Endothelial cell of umbilical vein (primary cell): ENCODE measurements at regions of chr1 and their contacts with region 1.

Region 1: GRCh38 chr1:150259758-150260669 is 2.4 kb downstream of the CA14 start:
- DNase-seq: peak; percentile 9
- H3K4me3 ChIP-seq: no peak overlapping the region
- H3K27ac ChIP-seq: no peak overlapping the region
- H3K4me1 ChIP-seq: peaks cover 7% of the 10 kb centered on the region
- H3K27me3 ChIP-seq: peaks cover 15 to 27% of the 10 kb centered on the region in 2 experiments
- CTCF ChIP-seq: no peak
- POLR2A ChIP-seq: no peak

Region 2: DNA sequence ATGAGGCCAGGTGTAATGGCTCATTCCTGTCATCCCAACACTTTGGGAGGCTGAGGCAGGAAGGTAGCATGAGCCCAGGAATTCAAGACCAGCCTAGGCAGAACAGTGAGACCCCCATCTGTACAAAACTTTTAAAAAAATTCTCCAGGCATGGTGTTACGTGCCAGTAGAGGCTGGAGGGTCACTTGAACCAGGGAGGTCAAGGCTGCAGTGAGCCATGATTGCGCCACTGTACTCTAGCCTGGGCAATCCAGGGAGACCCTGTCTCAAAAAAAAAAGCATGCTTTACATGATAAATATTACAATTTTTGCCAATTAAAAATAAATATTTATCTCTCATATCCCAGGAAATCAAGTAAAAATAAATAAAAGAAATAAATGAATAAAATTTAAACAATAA is 210.1 kb before region 1 on chr1:
- CTCF ChIA-PET with region 1: no interaction called
- POLR2A ChIA-PET with region 1: no interaction called
- dilution Hi-C with region 1: no loop called
- intact Hi-C with region 1: no loop called
- DNase-seq: no peak
- H3K4me3 ChIP-seq: no peak overlapping the region
- H3K27ac ChIP-seq: no peak overlapping the region
- H3K4me1 ChIP-seq: no peaks in the 10 kb centered on the region
- H3K27me3 ChIP-seq: no peaks in the 10 kb centered on the region
- CTCF ChIP-seq: no peak
- POLR2A ChIP-seq: no peak

Region 3: DNA sequence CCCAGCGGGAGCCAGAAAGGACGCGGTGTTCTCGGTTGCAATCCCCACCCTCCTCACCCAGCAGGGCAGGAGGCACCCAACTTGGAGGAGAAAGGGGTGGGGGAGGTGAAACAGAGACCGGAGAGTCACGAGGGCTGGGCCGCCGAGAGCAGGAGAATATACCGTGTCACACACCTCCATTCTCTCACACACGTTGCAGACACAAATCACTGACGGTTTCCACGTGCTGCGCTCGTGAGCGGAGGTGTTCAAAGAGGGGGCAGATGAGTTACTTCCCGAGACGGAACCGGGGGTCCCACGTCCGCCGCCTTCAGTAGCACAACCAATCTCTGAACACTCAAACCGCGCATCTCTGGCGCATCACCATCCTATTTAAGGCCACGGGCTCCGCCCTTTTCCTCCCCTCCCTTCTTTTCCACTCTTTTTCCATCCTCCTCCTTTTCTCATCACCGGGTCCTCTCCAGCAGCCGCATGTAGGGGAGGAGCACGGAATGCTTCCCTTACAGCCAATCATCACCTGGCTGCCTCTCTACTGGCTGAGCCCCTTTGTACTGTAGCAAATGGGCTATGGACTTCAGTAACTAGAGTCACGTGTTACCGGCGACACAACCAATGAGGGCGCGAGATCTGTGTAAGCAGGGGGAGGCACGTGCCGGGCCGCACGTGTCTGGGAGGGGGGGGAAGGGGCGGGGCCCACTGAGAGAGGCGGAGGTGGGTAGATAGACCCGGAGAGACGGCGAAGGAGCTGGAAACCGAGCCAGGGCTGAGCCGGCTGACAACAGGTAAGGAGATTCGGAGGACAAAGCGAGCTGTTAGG is 22.0 kb after region 1 on chr1 and contains the start of gene CIART:
- CTCF ChIA-PET with region 1: interaction called, 466 read pairs
- POLR2A ChIA-PET with region 1: no interaction called
- dilution Hi-C with region 1: no loop called
- intact Hi-C with region 1: loop called (anchors 1 kb)
- DNase-seq: peak; percentile 91
- H3K4me3 ChIP-seq: peak within 1 kb of the TSS; percentile 20 to 40 (median 29)
- H3K27ac ChIP-seq: no peak within 1 kb of the TSS
- H3K4me1 ChIP-seq: peaks cover 10% of the 10 kb centered on the region
- H3K27me3 ChIP-seq: peaks cover 0 to 8% of the 10 kb centered on the region in 2 experiments
- CTCF ChIP-seq: no peak
- POLR2A ChIP-seq: peak; percentile 44
- total RNA-seq, gene CIART: 1.0 and 2.4 TPM in 2 replicates

Region 4: GRCh38 chr1:150321826-150322166 is 61.8 kb after region 1 on chr1:
- CTCF ChIA-PET with region 1: interaction called, 5 read pairs
- POLR2A ChIA-PET with region 1: no interaction called
- dilution Hi-C with region 1: no loop called
- intact Hi-C with region 1: loop called (anchors 1 kb)
- DNase-seq: no peak
- H3K4me3 ChIP-seq: peak overlapping the region; percentile 68 to 88 (median 68)
- H3K27ac ChIP-seq: peak overlapping the region; percentile 62
- H3K4me1 ChIP-seq: peaks cover 7% of the 10 kb centered on the region
- H3K27me3 ChIP-seq: no peaks in the 10 kb centered on the region
- CTCF ChIP-seq: no peak
- POLR2A ChIP-seq: no peak

Region 5: DNA sequence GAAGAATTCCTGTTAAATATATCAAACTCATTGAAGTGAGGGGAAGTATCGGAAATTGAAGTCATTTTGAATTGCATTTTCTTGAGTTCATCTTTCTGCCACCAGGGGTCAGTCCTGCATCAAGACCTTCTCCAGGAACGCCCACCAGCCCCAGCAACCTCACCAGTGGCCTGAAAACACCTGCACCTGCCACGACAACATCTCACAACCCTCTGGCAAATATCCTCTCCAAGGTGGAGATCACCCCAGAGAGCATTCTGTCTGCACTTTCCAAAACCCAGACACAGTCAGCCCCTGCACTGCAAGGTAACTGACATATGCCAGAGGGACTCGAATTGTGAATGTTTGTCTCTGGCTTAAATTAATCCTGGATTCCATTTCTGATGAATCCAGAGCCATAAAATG is 204.4 kb after region 1 on chr1:
- CTCF ChIA-PET with region 1: no interaction called
- POLR2A ChIA-PET with region 1: no interaction called
- dilution Hi-C with region 1: no loop called
- intact Hi-C with region 1: loop called (anchors 2 kb)
- DNase-seq: peak; percentile 71
- H3K4me3 ChIP-seq: no peak overlapping the region
- H3K27ac ChIP-seq: no peak overlapping the region
- H3K4me1 ChIP-seq: peaks cover 2% of the 10 kb centered on the region
- H3K27me3 ChIP-seq: no peaks in the 10 kb centered on the region
- CTCF ChIP-seq: peak; percentile 69 to 71
- POLR2A ChIP-seq: no peak

Region 6: DNA sequence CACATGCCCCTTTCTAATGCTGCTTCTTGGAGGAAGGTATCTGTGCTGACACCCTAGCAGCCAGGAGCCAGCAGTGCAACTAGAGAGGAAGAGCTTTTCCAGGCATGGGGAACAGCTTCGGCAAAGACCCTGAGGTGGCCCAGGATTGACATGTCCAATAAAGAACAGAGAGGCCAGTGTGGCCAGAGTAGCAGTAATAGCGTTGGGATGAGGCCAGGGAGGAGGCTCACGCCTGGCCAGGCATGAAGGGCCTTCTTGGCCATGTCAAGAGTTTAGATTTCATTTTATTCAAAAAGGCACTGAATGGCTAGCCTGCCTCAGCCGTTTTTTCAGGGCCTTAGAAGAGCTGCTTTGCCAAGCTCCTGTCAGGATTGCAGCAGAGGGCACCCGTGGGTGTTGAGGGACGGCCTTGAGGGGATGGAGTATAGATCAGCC is 272.9 kb after region 1 on chr1:
- CTCF ChIA-PET with region 1: interaction called, 22 read pairs
- POLR2A ChIA-PET with region 1: no interaction called
- dilution Hi-C with region 1: no loop called
- intact Hi-C with region 1: loop called (anchors 2 kb)
- DNase-seq: no peak
- H3K4me3 ChIP-seq: no peak overlapping the region
- H3K27ac ChIP-seq: no peak overlapping the region
- H3K4me1 ChIP-seq: no peaks in the 10 kb centered on the region
- H3K27me3 ChIP-seq: no peaks in the 10 kb centered on the region
- CTCF ChIP-seq: no peak
- POLR2A ChIP-seq: no peak